ENCODE measurements at regions of chr1 and their contacts with region 1.

Region 1: GRCh38 chr1:202599677-202600431 is 110.4 kb downstream of the SYT2 start:
- DNase-seq: peak; percentile 89
- H3K27ac ChIP-seq: peak overlapping the region; percentile 20; the same call in 1 of the 2 replicates
- CTCF ChIP-seq: peak; percentile 84

Region 2: GRCh38 chr1:202501281-202501680 is 98.6 kb before region 1 on chr1:
- CTCF ChIA-PET with region 1: interaction called, 35 read pairs
- POLR2A ChIA-PET with region 1: no interaction called
- DNase-seq: peak; percentile 21
- H3K27ac ChIP-seq: no peak overlapping the region
- CTCF ChIP-seq: peak; percentile 56

Region 3: DNA sequence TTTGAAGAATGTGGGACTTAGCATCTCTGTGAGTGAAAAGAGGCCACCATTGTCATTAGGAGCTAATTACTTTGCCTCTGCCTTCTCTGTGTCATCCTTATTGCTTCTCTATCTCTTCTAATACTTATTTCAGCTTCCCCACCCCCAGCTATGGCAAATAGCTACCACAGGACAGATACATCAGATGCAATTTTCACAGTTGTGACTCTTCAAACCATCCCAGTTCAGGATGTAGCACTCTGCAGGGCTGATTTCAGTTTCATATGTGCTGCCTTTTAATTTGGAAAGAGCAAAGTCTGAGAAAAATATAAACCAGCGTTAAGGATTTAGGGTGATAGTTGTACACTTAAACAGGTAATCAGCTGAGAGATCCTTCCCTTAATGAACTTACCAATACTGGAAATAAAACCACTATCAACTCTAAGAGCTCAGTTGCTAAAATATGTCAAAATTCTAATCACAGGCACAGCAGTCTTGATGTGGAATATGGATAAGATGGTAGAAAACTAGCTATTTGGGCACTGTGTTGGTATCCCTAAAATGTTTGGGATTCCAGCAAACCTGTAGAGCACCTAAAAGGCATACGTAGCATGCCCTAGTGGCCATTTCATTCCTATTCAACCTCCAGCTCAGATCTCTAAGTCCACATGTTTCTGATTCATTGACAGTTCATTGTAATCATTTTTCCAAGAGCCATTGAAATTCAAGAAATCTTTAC is 38.0 kb before region 1 on chr1:
- CTCF ChIA-PET with region 1: interaction called, 10 read pairs
- POLR2A ChIA-PET with region 1: no interaction called
- DNase-seq: no peak
- H3K27ac ChIP-seq: no peak overlapping the region
- CTCF ChIP-seq: no peak

Region 4: DNA sequence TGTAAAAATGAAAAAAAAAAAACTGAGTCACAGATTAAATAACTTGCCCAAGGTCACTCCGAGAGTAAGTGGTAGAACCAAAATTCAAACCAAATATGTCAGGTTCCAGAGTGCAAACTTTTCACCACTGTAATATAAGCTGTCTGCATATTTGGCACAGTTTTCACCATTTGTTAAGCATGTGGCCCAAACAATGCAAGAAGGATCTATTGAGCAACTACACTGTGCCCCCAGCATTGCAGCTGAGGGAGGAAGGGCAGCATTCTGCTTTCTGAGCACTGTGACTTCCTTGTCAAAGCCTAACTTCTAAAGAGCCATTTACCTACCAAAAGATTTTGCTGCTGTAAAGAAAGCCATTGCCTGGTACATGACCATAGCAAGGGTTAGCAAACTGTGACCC is 23.0 kb before region 1 on chr1:
- CTCF ChIA-PET with region 1: interaction called, 13 read pairs
- POLR2A ChIA-PET with region 1: no interaction called
- DNase-seq: no peak
- H3K27ac ChIP-seq: no peak overlapping the region
- CTCF ChIP-seq: no peak

Region 5: DNA sequence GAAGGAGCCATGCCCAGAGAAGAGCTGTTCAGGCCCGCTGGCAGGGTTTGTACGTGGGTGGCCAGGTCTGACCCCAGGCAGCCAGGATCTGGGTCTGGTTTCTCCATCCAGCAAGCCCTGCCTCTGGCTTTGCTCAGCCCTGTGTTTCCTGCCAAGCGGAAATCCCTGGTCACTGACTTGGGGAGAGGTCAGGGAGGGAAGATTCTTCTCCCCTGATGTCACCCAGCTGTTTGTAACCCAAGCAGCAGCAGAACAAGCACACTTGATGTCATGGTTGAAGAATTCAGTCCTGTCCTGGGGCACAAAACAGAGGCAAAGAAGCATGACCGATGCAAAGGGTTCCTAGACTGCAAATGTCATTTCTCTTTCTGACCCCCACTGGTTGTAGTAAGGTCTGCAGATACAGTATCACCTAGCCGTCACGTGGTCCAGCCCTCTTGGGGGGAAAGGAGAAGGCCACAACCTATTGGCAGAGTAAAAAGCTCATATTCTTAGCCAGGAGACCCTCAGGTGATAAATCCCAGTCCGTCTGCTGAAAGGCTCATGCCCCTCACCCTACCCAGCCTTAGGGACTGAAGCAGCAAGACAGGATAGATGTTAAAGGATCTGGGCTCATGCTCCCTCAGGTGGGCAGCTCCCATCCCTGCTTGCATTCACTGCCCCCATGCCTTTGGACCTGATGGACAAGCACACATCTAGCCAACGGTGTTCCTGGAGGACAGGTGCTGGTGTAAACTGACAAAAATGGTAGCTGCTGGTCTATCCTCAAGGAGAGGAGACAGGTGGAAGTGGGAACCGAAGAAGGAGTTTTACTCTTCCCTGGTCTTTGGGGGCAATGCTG is 10.4 kb before region 1 on chr1:
- CTCF ChIA-PET with region 1: interaction called, 16 read pairs
- POLR2A ChIA-PET with region 1: no interaction called
- DNase-seq: peak; percentile 98
- H3K27ac ChIP-seq: peak overlapping the region; percentile 85
- CTCF ChIP-seq: no peak

Region 6: GRCh38 chr1:202716654-202717053 is 116.8 kb after region 1 on chr1:
- CTCF ChIA-PET with region 1: interaction called, 14 read pairs
- POLR2A ChIA-PET with region 1: no interaction called
- DNase-seq: no peak
- H3K27ac ChIP-seq: no peak overlapping the region
- CTCF ChIP-seq: no peak

Measured in RWPE1 (cell line).